PC-9 (cell line): ENCODE measurements at regions of chr13 and their contacts with region 1.

Region 1: GRCh38 chr13:45167611-45168556 is 33.0 kb downstream of the KCTD4 start:
- DNase-seq: peak; percentile 84 to 98
- H3K4me3 ChIP-seq: peak overlapping the region; percentile 22; the same call in 1 of the 2 replicates
- H3K27ac ChIP-seq: peak overlapping the region; percentile 84
- H3K4me1 ChIP-seq: peaks cover 52% of the 10 kb centered on the region
- H3K27me3 ChIP-seq: no peaks in the 10 kb centered on the region
- CTCF ChIP-seq: no peak

Region 2: DNA sequence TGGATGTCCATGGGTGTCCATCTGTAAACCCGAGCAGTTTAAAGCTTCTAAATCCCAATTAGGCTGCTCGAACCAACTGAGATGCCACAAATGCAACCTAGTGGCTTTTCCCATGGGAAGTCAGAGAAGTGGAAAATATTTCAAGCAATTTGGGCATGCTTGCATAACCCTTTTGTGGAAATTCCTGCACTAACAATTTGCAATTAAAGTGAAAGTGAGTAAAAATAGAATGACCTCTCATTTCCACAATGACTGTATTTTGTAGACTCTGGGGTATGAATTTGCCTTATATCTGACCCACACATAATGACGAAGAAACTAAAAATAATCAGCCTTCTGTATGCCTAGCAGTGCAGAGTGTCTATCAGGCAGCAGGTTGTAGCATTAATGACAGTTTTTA is 499.9 kb before region 1 on chr13:
- CTCF ChIA-PET with region 1: no interaction called
- POLR2A ChIA-PET with region 1: no interaction called
- intact Hi-C with region 1: no loop called
- DNase-seq: no peak
- H3K4me3 ChIP-seq: no peak overlapping the region
- H3K27ac ChIP-seq: peak overlapping the region; percentile 61
- H3K4me1 ChIP-seq: peaks cover 19% of the 10 kb centered on the region
- H3K27me3 ChIP-seq: no peaks in the 10 kb centered on the region
- CTCF ChIP-seq: no peak

Region 3: GRCh38 chr13:46176756-46177155 is 1008.9 kb after region 1 on chr13:
- CTCF ChIA-PET with region 1: no interaction called
- POLR2A ChIA-PET with region 1: interaction called, 10 read pairs
- intact Hi-C with region 1: no loop called
- DNase-seq: no peak
- H3K4me3 ChIP-seq: no peak overlapping the region
- H3K27ac ChIP-seq: no peak overlapping the region
- H3K4me1 ChIP-seq: peaks cover 22% of the 10 kb centered on the region
- H3K27me3 ChIP-seq: no peaks in the 10 kb centered on the region
- CTCF ChIP-seq: no peak